ENCODE measurements at regions of chr19 and their contacts with region 1.

Region 1: DNA sequence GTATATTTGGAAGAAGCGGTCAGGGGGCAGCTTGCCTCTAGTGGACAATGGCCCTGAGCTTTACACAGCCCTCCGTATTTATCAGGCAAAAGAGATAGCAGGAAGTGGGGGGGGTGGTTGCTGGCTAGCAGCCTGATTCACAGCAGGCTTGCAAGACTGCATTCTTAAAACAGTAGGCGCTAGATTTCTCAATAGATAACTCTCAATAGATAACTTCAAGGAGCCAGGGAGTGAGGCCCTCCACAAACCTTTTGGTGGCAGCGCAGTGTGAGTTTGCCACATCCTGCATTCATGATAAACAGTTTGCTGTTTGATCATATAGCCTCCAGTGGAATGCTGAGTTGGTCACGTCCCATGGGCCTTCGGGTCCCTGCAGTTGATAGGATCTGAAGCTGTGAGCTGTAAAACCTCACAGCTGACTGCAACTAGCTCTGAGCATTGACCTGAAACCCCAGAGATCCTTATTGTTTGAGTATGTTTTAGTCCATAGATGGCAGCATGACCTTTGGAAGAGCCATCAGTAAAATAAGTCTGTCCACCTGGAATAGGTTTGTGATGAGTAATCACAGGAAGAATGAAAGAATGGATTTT is 12.2 kb downstream of the FPR3 start:
- DNase-seq: peak; percentile 85
- H3K4me3 ChIP-seq: no peak overlapping the region
- H3K27ac ChIP-seq: no peak overlapping the region
- H3K4me1 ChIP-seq: peaks cover 27% of the 10 kb centered on the region
- H3K27me3 ChIP-seq: no peaks in the 10 kb centered on the region
- CTCF ChIP-seq: no peak

Region 2: GRCh38 chr19:51473009-51473707 is 334.0 kb before region 1 on chr19:
- CTCF ChIA-PET with region 1: interaction called, 4 read pairs
- POLR2A ChIA-PET with region 1: no interaction called
- intact Hi-C with region 1: loop called (anchors 10 kb)
- DNase-seq: peak; percentile 81
- H3K4me3 ChIP-seq: no peak overlapping the region
- H3K27ac ChIP-seq: no peak overlapping the region
- H3K4me1 ChIP-seq: no peaks in the 10 kb centered on the region
- H3K27me3 ChIP-seq: peaks cover 59% of the 10 kb centered on the region
- CTCF ChIP-seq: peak; percentile 83

Region 3: GRCh38 chr19:51607920-51608562 is 199.2 kb before region 1 on chr19:
- CTCF ChIA-PET with region 1: no interaction called
- POLR2A ChIA-PET with region 1: no interaction called
- intact Hi-C with region 1: loop called (anchors 10 kb)
- DNase-seq: peak; percentile 83
- H3K4me3 ChIP-seq: no peak overlapping the region
- H3K27ac ChIP-seq: no peak overlapping the region
- H3K4me1 ChIP-seq: no peaks in the 10 kb centered on the region
- H3K27me3 ChIP-seq: no peaks in the 10 kb centered on the region
- CTCF ChIP-seq: peak; percentile 90

Region 4: DNA sequence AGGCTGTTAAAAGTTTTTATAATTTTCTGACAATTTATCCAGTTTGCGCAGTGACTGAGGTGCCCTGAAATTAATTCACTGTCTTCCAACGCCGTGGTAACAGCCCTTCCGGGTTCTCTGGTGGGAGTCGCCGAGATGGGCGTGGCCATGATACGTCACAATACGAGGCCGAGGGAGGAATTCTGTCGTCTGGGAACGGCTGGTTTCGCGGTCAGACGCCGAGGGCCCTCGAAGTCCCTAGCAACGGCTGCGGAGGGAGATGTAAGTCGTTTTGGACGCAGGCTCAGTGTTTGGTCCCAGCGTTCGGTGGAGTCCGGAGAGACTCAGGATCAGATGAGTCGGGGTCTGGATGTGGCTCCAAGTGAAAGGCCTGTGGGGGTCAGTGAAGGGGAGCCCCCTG is 141.8 kb after region 1 on chr19:
- CTCF ChIA-PET with region 1: no interaction called
- POLR2A ChIA-PET with region 1: no interaction called
- intact Hi-C with region 1: no loop called
- DNase-seq: peak; percentile 14
- H3K4me3 ChIP-seq: no peak overlapping the region
- H3K27ac ChIP-seq: no peak overlapping the region
- H3K4me1 ChIP-seq: no peaks in the 10 kb centered on the region
- H3K27me3 ChIP-seq: no peaks in the 10 kb centered on the region
- CTCF ChIP-seq: no peak